Dorsolateral prefrontal cortex (tissue), 120 donors: ENCODE measurements at regions of chrX and their contacts with region 1.

Region 1: DNA sequence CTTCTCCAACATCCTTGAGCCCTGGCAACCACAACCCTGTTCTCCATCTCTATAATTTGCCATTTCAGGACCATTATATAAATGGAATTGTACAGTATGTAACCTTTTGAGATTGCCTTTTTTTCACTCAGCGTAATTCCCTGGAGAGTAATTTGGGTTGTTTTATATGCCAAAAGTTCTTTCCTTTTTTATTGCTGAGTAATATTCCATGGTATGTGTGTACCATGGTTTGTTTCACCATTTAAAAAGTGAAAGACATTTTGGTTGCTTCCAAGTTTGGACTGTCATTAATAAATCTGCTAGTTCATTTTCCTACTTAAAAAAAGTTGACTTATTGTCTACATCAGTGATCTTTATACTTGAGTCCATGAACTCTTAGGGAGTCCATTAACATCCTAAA is 33.0 kb upstream of the SMIM10 start:
- DNase-seq: no peak
- H3K4me3 ChIP-seq: no peak overlapping the region
- H3K27ac ChIP-seq: no peak overlapping the region
- H3K27me3 ChIP-seq: peaks cover 0 to 47% (median 13%) of the 10 kb centered on the region in 45 donors
- CTCF ChIP-seq: no peak

Region 2: DNA sequence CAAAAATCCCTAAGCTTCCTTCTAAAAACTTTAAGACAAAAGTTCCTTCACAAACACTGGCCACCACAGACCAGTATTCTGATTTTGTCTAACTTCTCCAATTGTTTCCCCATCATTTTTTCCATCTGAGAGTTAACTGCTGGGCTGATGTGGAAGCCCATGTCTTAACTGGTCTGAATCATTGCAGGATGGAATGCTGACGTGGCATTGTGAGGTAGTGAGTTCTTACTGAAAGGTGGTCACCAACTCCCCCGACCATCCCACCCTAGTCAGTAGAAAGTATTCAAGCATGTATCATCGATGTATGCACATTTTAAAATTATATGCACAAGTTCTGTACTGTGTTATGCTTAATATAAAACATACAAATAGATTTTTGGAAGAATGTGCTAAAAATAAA is 66.2 kb before region 1 on chrX:
- intact Hi-C with region 1: no loop called
- DNase-seq: no peak
- H3K4me3 ChIP-seq: no peak overlapping the region
- H3K27ac ChIP-seq: no peak overlapping the region
- H3K27me3 ChIP-seq: peaks cover 0 to 65% (median 14%) of the 10 kb centered on the region in 45 donors
- CTCF ChIP-seq: no peak

Region 3: DNA sequence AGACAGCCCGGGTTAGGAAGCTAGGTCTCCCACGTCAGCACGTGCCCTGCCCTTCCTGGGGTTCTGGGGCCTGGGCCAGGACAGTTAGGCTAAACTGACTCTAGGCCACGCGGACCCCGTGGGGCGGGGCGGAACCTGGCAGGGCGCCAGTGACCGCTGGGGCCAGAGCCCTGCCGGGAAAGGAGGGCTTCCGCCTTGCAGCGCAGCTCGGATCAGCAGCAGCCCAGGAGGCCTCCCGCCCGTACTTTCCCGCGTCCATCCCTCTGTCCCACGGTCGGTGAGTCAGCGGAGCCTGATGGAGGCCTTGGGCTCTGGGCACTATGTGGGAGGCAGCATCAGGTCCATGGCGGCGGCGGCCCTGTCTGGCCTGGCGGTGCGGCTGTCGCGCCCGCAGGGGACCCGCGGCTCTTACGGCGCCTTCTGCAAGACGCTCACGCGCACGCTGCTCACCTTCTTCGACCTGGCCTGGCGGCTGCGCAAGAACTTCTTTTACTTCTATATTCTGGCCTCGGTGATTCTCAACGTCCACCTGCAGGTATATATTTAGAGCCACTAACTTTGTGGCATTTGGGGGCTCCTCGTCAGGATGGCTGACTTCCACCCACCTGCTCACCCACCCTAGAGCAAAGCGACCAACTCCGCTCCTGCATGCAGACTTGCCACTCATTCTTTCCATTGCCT is 33.1 kb after region 1 on chrX and contains the start of gene SMIM10:
- intact Hi-C with region 1: no loop called
- DNase-seq: peak in 5 of 10 donors; percentile 19 to 56 (median 37)
- H3K4me3 ChIP-seq: peak within 1 kb of the TSS; percentile 26 to 73 (median 55)
- H3K27ac ChIP-seq: peak within 1 kb of the TSS in 1 of 59 donors; percentile 53
- H3K27me3 ChIP-seq: peaks cover 0 to 58% (median 14%) of the 10 kb centered on the region in 45 donors
- CTCF ChIP-seq: no peak
- total RNA-seq, gene SMIM10: 0.77 to 6.9 (median 3.3) TPM

Region 4: DNA sequence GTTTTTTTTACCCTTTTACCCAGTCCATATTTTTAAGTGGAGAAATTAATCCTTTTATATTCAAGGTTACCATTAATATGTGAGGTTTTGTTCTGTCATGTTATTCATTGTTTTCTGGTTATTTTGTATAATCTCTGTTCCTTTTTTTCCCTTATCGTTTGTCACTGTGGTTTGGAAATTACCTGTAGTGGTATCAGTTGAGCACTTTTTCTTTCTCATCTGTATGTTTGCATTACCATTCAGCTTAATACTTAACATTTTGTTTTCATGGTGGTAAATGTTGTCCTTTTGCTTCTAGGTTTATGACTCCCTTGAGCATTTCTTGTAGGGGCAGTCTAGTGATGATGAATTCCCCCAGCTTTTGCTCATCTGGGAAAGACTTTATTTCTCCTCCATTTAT is 358.0 kb after region 1 on chrX:
- intact Hi-C with region 1: loop called in 1 of 2 experiments (anchors 10 kb)
- DNase-seq: no peak
- H3K4me3 ChIP-seq: no peak overlapping the region
- H3K27ac ChIP-seq: no peak overlapping the region
- H3K27me3 ChIP-seq: peaks cover 0 to 18% (median 0%) of the 10 kb centered on the region in 45 donors
- CTCF ChIP-seq: no peak